OCI-LY7 (cell line): ENCODE measurements at regions of chr5 and their contacts with region 1.

Region 1: GRCh38 chr5:6188344-6188743 is 190.0 kb downstream of the MED10 start:
- DNase-seq: peak; percentile 97
- H3K4me3 ChIP-seq: peak overlapping the region; percentile 56
- H3K27ac ChIP-seq: peak overlapping the region; percentile 98
- H3K4me1 ChIP-seq: peaks cover 71% of the 10 kb centered on the region
- CTCF ChIP-seq: no peak

Region 2: GRCh38 chr5:5752844-5753243 is 435.5 kb before region 1 on chr5:
- CTCF ChIA-PET with region 1: no interaction called
- POLR2A ChIA-PET with region 1: no interaction called
- intact Hi-C with region 1: loop called (anchors 10 kb)
- DNase-seq: peak; percentile 68
- H3K4me3 ChIP-seq: peak overlapping the region; percentile 39
- H3K27ac ChIP-seq: peak overlapping the region; percentile 75
- H3K4me1 ChIP-seq: peaks cover 79% of the 10 kb centered on the region
- CTCF ChIP-seq: no peak

Region 3: GRCh38 chr5:6202149-6202967 is 14.0 kb after region 1 on chr5:
- CTCF ChIA-PET with region 1: no interaction called
- POLR2A ChIA-PET with region 1: interaction called, 14 read pairs
- intact Hi-C with region 1: no loop called
- DNase-seq: peak; percentile 47
- H3K4me3 ChIP-seq: no peak overlapping the region
- H3K27ac ChIP-seq: peak overlapping the region; percentile 14
- H3K4me1 ChIP-seq: peaks cover 24% of the 10 kb centered on the region
- CTCF ChIP-seq: peak; percentile 63

Region 4: DNA sequence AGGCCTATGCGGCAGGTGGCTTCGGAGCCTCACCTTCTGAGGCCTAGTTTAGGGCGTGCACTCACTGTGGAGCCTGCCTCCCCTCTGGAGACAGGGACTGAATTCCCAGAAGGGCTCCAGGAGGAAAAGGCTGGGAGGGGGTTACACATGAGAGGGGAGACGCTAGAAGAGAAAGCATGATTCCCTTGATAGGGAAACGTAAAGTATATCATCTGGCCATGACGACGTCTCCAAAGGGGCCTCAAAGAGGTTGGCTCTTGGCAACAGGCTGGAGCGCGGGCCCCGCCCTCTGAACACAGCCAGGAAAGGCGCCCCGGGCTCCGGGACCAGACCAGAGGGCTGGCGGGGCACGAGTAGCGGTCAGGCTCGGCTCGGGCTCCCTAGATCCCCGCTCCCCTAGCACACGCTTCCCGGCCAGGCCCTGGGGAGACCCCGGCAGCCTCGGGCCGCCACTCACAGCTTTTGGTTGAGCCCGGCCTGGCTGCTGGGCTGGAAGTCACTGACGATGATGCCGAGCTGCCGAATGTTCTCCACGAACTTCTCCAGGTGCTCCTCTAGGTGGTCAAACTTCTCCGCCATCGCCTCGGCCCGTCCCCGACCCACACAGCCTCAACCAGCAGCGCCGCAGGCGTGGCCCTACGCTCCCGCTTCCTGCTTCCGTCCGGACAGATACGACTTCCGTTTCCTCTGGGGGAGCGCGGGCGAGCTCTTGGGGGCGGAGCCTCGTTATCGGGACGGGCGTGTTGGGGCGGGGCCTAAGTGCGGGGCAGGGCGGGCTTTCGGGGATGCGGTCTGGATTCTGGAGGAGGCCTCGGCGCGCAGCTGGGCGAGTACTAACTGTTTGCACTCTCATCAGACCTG is 189.8 kb after region 1 on chr5 and contains the start of gene MED10:
- CTCF ChIA-PET with region 1: no interaction called
- POLR2A ChIA-PET with region 1: no interaction called
- intact Hi-C with region 1: loop called (anchors 5 kb)
- DNase-seq: peak; percentile 95
- H3K4me3 ChIP-seq: peak within 1 kb of the TSS; percentile 88
- H3K27ac ChIP-seq: peak within 1 kb of the TSS; percentile 39
- H3K4me1 ChIP-seq: peaks cover 18% of the 10 kb centered on the region
- CTCF ChIP-seq: no peak
- total RNA-seq, gene MED10: 7.9 and 16.2 TPM in 2 replicates

Region 5: DNA sequence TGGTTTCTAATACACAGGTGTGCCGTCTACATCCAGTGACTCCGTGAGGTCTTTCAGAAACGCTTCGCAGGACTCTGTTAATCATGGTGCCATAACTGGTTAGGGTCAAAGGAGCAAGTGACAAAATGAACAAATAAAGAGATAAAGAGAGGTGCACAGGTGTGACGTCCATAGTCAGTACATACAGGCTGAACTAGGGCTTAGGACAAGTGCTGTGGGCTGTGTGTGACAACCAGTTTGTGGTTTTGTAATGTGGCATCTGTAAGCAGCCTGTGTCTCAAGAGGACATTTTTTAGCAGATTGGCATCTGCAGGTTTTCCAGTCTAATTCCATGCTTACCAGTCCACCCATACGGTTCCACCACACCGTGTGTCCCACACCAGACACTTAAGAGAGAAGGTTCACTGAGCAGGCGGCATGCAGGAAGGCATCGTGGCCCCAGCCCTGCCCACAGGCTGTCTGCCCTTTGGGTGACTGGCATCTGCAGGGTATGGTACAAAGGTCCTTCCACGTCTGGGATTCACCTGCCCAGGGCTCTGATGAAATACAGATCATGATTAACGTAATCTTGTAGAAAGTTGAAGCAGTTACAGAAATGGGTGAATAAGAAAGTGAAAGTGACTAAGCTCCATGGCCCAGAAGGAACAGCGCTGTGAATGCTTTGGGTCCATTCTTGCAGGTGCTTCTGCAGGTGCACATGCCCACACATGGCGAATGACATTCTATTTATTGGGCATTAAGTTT is 471.8 kb after region 1 on chr5:
- CTCF ChIA-PET with region 1: no interaction called
- POLR2A ChIA-PET with region 1: no interaction called
- intact Hi-C with region 1: loop called (anchors 10 kb)
- DNase-seq: peak; percentile 88
- H3K4me3 ChIP-seq: peak overlapping the region; percentile 61
- H3K27ac ChIP-seq: peak overlapping the region; percentile 92
- H3K4me1 ChIP-seq: peaks cover 32% of the 10 kb centered on the region
- CTCF ChIP-seq: no peak